PC-9 (cell line): ENCODE measurements at regions of chr20 and their contacts with region 1.

Region 1: GRCh38 chr20:19757487-19758132 is 448 bp upstream of the RIN2 start:
- DNase-seq: peak; percentile 71 to 79
- H3K4me3 ChIP-seq: peak overlapping the region; percentile 82
- H3K27ac ChIP-seq: peak overlapping the region; percentile 99
- H3K4me1 ChIP-seq: peaks cover 38% of the 10 kb centered on the region
- H3K27me3 ChIP-seq: no peaks in the 10 kb centered on the region
- CTCF ChIP-seq: no peak

Region 2: DNA sequence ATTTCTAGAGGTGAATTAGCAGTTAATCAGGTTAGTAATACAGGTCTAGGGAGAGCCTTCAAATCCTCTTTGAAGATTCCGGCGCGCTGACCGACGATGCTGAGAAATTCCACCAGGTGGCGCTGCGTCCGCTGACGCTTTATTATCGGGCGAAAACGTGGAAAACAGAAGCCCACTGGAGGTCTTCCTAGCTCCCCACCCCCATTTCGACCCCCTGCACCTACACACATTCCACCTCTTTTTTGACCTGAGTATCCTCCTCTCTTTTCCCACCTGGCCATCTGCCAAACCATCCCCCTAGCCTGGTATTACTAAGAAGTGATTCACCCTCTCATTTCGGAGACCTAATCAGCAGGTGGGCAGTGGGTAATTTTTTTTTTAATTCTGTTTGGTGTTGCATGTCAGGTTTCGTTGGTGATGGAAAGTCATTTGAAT is 64.9 kb before region 1 on chr20:
- CTCF ChIA-PET with region 1: interaction called, 3 read pairs
- POLR2A ChIA-PET with region 1: no interaction called
- intact Hi-C with region 1: loop called (anchors 1 kb)
- DNase-seq: peak; percentile 70 to 72
- H3K4me3 ChIP-seq: peak overlapping the region; percentile 34; the same call in 1 of the 2 replicates
- H3K27ac ChIP-seq: peak overlapping the region; percentile 45
- H3K4me1 ChIP-seq: peaks cover 10% of the 10 kb centered on the region
- H3K27me3 ChIP-seq: no peaks in the 10 kb centered on the region
- CTCF ChIP-seq: peak; percentile 98

Region 3: GRCh38 chr20:19713822-19714578 is 43.6 kb before region 1 on chr20:
- CTCF ChIA-PET with region 1: no interaction called
- POLR2A ChIA-PET with region 1: interaction called, 11 read pairs
- intact Hi-C with region 1: no loop called
- DNase-seq: no peak
- H3K4me3 ChIP-seq: no peak overlapping the region
- H3K27ac ChIP-seq: no peak overlapping the region
- H3K4me1 ChIP-seq: no peaks in the 10 kb centered on the region
- H3K27me3 ChIP-seq: peaks cover 3% of the 10 kb centered on the region; the same call in 1 of the 2 replicates
- CTCF ChIP-seq: no peak

Region 4: DNA sequence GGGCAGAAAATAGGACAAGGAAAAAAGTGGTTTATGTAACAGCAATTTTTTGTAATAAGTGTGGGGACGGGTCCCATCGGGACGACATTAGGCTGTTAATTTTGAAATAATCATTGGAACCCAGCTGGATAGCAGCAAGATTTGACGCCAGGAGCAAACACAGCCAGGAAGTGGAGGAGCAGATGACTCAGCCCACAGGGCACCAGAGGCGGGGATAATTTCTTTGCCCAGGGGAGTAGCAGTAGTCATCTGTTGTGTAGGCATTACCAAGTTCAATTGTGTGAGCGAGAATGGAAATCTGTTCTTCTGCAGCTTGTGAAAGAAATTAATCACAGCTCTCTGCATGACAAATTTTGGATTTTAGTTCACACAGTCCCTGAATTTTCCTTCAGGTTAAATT is 22.2 kb before region 1 on chr20:
- CTCF ChIA-PET with region 1: interaction called, 7 read pairs
- POLR2A ChIA-PET with region 1: interaction called, 7 read pairs
- intact Hi-C with region 1: loop called (anchors 2 kb)
- DNase-seq: peak; percentile 79 to 90
- H3K4me3 ChIP-seq: no peak overlapping the region
- H3K27ac ChIP-seq: peak overlapping the region; percentile 100
- H3K4me1 ChIP-seq: peaks cover 49% of the 10 kb centered on the region
- H3K27me3 ChIP-seq: no peaks in the 10 kb centered on the region
- CTCF ChIP-seq: no peak

Region 5: DNA sequence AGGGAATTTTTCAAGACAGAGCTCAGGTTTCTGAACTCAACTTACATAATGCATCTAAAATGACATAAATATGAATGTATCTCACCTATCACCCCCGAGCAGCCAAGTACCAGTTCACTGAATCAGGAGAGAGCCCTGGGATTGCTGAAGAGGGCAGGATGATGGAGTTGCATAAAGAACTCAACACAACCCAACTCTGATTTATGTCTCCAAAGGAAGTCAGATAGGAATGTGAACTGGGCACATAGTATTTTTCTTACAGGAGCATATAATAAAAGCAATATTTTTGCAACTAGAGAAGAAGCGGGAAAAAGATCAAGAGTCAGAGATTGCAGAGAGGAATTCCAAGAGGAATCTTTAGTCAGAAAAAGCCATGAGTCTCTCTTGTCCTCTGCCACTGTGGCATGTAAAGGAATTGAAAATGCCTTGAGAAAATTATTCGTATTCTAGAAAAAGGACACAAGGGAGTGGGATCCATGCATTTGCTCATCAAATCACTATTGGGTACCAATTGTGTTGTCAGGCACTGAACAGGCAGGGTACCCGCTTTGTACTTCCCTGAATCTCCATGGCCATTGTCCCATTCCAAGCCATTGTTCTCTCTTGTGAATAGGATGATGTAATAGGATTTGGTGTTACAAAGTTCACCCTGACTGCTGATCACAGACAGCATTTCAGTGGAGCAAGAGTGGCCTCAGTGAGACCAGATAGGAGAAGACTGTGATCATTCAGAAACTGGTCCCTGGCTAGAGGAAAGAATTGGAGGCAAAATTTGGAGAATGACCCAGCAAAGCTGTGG is 16.7 kb after region 1 on chr20:
- CTCF ChIA-PET with region 1: no interaction called
- POLR2A ChIA-PET with region 1: interaction called, 10 read pairs
- intact Hi-C with region 1: no loop called
- DNase-seq: peak in 1 of 2 experiments; percentile 49
- H3K4me3 ChIP-seq: no peak overlapping the region
- H3K27ac ChIP-seq: no peak overlapping the region
- H3K4me1 ChIP-seq: peaks cover 19% of the 10 kb centered on the region
- H3K27me3 ChIP-seq: no peaks in the 10 kb centered on the region
- CTCF ChIP-seq: no peak

Region 6: GRCh38 chr20:19850198-19850533 is 92.6 kb after region 1 on chr20:
- CTCF ChIA-PET with region 1: no interaction called
- POLR2A ChIA-PET with region 1: no interaction called
- intact Hi-C with region 1: no loop called
- DNase-seq: no peak
- H3K4me3 ChIP-seq: no peak overlapping the region
- H3K27ac ChIP-seq: no peak overlapping the region
- H3K4me1 ChIP-seq: no peaks in the 10 kb centered on the region
- H3K27me3 ChIP-seq: no peaks in the 10 kb centered on the region
- CTCF ChIP-seq: no peak